ENCODE measurements at regions of chr15 and their contacts with region 1.

Region 1: DNA sequence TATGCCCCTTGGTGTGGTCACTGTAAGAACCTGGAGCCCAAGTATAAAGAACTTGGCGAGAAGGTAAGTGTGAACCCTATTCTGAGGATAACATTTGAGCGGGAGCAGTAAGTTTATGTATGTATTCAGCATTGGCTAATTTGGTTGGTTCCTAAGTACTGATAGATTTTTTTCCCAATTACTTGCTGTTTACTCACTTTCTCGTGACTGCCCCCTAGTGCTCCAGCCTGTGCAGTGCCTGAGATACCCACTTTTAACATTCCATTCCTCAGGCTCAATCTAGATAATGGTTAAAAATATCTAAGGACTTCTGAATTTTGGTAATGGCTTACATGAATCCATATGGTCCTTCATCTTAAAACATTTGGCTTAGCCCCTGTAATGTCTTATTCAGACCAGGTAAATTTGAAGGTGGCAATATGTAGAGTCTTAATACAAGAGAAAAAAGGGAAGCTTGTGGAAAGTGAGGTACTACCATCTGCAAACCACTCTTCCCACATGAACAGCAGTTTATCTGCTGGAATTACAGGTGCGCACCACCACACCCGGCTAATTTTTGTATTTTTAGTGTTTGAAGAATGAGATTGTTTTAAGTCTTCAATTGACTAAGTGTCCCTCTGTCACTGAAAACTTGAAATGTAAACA is 7.1 kb downstream of the ELL3 start:
- DNase-seq: peak; percentile 49
- H3K4me3 ChIP-seq: no peak overlapping the region
- H3K27ac ChIP-seq: no peak overlapping the region
- H3K27me3 ChIP-seq: no peaks in the 10 kb centered on the region
- CTCF ChIP-seq: peak; percentile 91

Region 2: DNA sequence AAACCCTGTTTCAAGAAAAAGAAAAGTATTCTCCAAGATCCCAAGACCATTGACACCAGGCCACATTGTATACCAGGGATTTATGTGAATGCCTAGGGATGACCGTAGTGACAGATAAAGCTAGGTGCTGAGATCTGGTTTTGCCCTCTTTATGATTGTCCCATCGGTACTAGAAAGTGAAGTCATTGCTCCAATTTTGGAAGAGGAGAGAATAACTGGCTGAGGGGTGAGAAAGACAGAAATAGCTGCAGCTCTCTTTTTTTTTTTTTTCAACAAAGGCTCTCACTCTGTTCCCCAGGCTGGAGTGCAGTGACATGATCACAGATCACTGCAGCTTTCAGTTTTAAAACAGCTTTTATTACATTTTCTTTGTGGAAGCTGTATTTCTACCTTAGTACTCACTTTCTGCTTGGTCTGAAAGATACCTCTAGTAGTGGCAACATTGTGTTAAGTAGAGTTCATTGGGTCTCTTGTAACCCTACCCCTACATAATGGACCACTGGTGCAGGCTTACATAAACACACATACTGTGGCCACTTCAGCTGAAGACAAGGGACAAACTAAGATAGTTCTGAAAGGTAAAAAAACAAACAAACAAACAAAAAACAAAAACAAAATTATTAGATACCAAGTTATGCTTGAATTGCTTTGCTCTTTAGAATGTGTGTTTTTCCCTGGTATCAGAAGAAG is 416.9 kb before region 1 on chr15:
- CTCF ChIA-PET with region 1: no interaction called
- POLR2A ChIA-PET with region 1: interaction called, 11 read pairs
- DNase-seq: no peak
- H3K4me3 ChIP-seq: no peak overlapping the region
- H3K27ac ChIP-seq: no peak overlapping the region
- H3K27me3 ChIP-seq: no peaks in the 10 kb centered on the region
- CTCF ChIP-seq: no peak

Measured in AG04450 (cell line).